Natural killer cell (primary cell): ENCODE measurements at regions of chr10 and their contacts with region 1.

Region 1: GRCh38 chr10:14200698-14201544 is 129.8 kb downstream of the FRMD4A start:
- DNase-seq: no peak
- ATAC-seq: no peak
- H3K4me3 ChIP-seq: no peak overlapping the region
- H3K4me3 Mint-ChIP-seq: no peak overlapping the region
- H3K27ac ChIP-seq: no peak overlapping the region
- H3K27ac Mint-ChIP-seq: no peak overlapping the region
- H3K4me1 ChIP-seq: no peaks in the 10 kb centered on the region
- H3K4me1 Mint-ChIP-seq: no peaks in the 10 kb centered on the region
- H3K27me3 ChIP-seq: no peaks in the 10 kb centered on the region
- H3K27me3 Mint-ChIP-seq: peaks cover 9 to 27% of the 10 kb centered on the region in 2 donors
- CTCF ChIP-seq: no peak

Region 2: GRCh38 chr10:13831711-13832141 is 369.2 kb before region 1 on chr10:
- intact Hi-C with region 1: no loop called
- DNase-seq: no peak
- ATAC-seq: no peak
- H3K4me3 ChIP-seq: no peak overlapping the region
- H3K4me3 Mint-ChIP-seq: no peak overlapping the region
- H3K27ac ChIP-seq: no peak overlapping the region
- H3K27ac Mint-ChIP-seq: no peak overlapping the region
- H3K4me1 ChIP-seq: no peaks in the 10 kb centered on the region
- H3K4me1 Mint-ChIP-seq: peaks cover 0 to 7% of the 10 kb centered on the region in 2 donors
- H3K27me3 ChIP-seq: no peaks in the 10 kb centered on the region
- H3K27me3 Mint-ChIP-seq: peaks cover 7 to 25% of the 10 kb centered on the region in 2 donors
- CTCF ChIP-seq: no peak

Region 3: DNA sequence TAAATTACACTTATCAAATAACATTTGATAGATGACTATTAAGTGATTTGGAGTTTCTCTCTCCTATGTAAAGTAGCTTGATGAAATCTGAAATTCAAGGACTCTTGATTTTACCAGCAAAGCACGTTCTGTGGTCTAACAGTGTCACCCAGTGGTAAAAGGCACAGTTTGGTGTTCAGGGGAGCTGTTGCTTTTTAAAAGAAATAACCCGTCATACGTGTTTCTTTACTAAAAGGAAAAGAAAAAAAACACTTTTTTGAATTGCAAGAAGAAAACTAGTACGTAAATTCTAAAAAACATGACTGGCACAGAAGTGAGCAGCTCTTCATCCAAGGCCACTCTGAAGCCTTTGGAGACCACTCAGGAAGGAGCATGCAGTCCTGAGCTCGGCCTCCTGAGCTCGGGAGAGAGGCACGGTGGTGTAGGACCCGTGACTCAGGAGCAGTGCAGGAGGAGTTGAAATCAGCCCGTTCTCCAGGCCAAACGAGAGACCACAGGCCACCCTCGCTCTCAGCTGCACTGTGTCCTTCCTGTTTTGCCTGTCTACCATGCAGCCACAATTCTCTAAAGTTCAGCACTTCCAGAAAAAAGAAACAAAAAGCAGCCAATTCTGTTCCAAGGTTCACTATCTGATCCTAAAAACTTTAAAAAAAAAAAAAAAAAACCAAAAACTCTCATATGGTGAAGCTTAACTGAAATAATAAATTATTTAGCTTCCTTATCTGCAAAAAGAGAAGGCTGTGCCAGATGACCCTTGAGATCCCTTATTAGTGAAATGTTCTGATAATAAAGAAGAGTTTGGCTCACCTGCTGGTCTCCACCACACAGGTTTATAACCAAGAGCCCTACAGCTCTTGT is 342.4 kb after region 1 on chr10:
- intact Hi-C with region 1: loop called (anchors 1 kb)
- DNase-seq: peak in 1 of 2 donors; percentile 81
- ATAC-seq: peak; percentile 71 to 85 (median 82)
- H3K4me3 ChIP-seq: no peak overlapping the region
- H3K4me3 Mint-ChIP-seq: peak overlapping the region; percentile 78
- H3K27ac ChIP-seq: peak overlapping the region; percentile 73
- H3K27ac Mint-ChIP-seq: peak overlapping the region; percentile 78 to 98
- H3K4me1 ChIP-seq: peaks cover 41% of the 10 kb centered on the region
- H3K4me1 Mint-ChIP-seq: peaks cover 84 to 93% of the 10 kb centered on the region in 2 donors
- H3K27me3 ChIP-seq: no peaks in the 10 kb centered on the region
- H3K27me3 Mint-ChIP-seq: no peaks in the 10 kb centered on the region
- CTCF ChIP-seq: peak; percentile 78